RWPE1 (cell line): ENCODE measurements at regions of chr9 and their contacts with region 1.

Region 1: GRCh38 chr9:34403554-34404380 is 27.1 kb upstream of the MYORG start:
- DNase-seq: peak; percentile 78
- H3K27ac ChIP-seq: no peak overlapping the region
- CTCF ChIP-seq: peak; percentile 100

Region 2: GRCh38 chr9:34328987-34329832 is 74.6 kb before region 1 on chr9 and contains the starts of genes KIF24 and NUDT2:
- CTCF ChIA-PET with region 1: interaction called, 11 read pairs
- POLR2A ChIA-PET with region 1: no interaction called
- DNase-seq: peak; percentile 99
- H3K27ac ChIP-seq: peak within 1 kb of the TSS; percentile 93
- CTCF ChIP-seq: no peak

Region 3: DNA sequence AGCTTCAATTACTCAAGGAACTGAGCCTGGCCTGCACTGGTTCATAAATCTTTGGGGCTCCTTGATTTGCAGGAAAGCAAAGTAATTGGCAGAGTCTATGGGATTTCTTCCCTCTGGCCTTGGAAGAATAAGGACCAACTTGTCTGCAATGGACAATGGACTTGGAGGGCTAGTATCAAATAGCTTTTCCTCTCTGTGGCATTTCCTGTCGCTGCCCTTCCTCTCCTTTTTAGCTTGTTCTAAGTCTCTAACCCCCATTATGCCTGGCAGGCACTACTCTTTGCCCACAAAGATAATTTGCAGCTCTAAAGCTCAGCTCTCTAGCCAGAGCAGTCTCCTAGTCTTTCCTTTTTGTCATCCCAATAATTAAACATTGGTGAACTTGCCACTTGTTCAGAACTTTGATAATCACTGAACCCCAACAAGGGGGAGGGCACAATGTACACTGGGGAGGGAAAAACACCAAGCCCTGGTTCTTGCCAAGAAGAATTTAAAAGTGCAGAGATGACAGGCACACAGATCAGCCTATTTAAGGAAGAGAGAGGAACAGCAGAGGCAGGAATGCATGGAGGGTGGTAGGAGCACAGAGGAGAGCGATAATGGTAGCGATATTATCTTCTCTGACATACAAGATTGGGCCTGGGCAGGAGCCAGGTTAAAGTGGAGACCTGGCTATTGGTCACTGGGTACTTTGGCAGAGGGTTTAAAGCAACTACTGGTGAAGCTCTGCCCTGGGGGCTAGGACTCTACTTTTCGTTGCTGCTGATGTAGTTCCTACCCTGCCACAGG is 16.1 kb after region 1 on chr9:
- CTCF ChIA-PET with region 1: interaction called, 10 read pairs
- POLR2A ChIA-PET with region 1: interaction called, 7 read pairs
- DNase-seq: no peak
- H3K27ac ChIP-seq: peak overlapping the region; percentile 33; the same call in 1 of the 2 replicates
- CTCF ChIP-seq: no peak

Region 4: DNA sequence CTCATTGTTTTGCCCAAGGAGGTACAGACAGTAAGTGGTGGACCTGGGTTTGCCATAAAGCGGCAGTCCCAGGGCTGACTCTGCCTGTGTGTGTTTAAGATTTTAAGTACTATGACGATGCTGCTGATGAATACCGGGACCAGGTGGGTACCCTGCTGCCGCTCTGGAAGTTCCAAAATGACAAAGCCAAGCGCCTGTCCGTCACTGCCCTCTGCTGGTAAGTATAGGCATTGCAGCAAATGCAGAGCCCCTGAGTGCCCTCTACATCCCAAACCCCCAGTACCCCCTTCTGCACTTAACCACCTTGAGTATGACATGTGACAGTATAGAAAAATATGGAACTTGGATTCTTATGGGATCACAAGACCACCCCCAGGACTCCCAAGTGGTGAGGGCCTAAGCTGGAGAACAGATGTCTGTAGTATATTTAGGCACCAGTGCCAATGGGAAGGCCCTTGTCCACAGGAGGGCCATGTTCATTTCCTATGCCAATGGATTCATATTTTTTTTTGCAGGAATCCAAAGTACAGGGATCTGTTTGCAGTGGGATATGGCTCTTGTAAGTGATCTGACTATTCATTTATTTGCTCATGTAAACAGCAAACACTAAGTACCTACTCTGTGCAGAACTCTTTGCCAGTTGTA is 97.0 kb after region 1 on chr9:
- CTCF ChIA-PET with region 1: interaction called, 11 read pairs
- POLR2A ChIA-PET with region 1: no interaction called
- DNase-seq: peak; percentile 78
- H3K27ac ChIP-seq: no peak overlapping the region
- CTCF ChIP-seq: peak; percentile 100

Region 5: DNA sequence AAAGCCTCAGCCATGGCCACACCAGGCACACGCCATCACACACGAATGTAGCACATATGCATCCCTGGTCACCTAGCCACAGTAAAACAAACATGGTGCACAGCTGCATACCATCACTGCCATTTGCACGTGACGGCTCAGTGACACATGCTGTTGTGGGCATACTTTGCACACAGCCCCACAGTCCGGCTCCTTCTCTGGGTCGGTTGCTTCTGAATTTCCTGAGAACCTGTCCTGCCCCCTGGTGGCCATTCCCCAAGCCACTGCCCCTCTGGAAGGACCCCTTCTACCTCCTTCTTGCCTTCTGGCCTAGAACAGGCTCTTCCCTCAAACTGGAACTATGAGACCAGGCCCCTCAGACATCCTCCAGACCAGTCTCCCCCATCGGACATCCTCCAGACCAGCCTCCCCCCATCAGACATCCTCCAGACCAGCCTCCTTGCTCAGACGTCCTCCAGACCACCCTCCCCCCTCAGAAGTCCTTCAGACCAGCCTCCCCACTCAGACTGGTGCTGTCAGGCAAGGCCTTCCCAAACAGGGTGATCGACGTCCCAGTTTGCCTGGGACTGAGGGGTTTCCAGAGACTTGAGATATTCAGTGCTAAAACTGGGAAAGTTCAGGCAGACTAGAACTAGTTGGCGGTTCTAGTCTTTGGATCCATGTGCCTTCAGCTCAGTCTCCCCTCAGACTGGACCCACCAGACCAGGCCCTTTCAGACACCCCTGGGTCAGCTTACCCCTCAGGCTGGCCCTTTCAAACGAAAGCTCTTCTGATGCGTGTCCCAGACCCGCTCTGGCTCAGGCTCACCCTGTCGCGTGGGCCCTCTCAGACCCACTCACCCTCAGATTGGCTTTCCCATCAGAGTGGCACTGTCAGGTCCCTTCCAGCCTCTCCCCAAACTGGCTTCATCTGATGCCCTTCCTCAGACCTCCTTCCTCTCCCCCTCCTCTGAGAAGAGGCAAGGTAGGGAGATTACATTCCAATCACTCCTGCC is 143.4 kb after region 1 on chr9:
- CTCF ChIA-PET with region 1: interaction called, 13 read pairs
- POLR2A ChIA-PET with region 1: no interaction called
- DNase-seq: peak; percentile 41
- H3K27ac ChIP-seq: no peak overlapping the region
- CTCF ChIP-seq: peak; percentile 70

Region 6: DNA sequence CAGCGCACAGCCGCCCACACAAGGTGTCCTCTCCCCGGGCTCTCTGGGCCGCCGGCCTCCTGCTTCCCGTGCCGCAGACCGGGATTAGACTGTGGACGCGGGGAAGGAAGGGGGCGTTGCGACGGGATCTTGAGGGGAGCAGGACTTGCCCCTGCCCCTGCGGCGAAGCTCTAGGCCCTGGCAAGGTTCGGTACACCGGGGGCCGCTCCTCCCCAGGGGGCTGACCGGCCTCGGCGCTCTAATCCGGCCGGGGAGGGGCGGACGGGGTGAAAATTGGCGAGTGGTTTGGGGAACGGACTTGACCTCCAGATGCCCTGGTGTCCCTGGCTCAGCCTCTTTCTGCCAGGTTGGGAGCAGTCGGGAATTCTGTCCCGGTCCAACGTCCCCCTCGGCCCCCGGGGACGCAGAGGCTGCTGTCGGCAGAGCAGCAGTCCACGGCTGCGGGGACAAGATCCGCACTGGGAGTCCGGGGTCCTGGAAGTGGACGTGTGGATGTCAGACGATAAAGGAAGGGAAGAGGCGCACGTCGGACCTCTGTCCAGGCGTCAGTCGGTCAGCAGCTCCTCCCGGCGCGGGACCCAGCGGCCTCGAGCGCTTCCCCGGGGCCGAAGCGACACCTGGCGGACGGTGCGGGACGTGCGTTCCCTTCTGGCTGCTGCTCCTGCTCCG is 187.6 kb after region 1 on chr9:
- CTCF ChIA-PET with region 1: interaction called, 32 read pairs
- POLR2A ChIA-PET with region 1: no interaction called
- DNase-seq: peak; percentile 88
- H3K27ac ChIP-seq: no peak overlapping the region
- CTCF ChIP-seq: peak; percentile 99

Region 7: GRCh38 chr9:34603610-34604231 is 200.0 kb after region 1 on chr9:
- CTCF ChIA-PET with region 1: interaction called, 10 read pairs
- POLR2A ChIA-PET with region 1: no interaction called
- DNase-seq: peak; percentile 87
- H3K27ac ChIP-seq: no peak overlapping the region
- CTCF ChIP-seq: peak; percentile 98

Region 8: DNA sequence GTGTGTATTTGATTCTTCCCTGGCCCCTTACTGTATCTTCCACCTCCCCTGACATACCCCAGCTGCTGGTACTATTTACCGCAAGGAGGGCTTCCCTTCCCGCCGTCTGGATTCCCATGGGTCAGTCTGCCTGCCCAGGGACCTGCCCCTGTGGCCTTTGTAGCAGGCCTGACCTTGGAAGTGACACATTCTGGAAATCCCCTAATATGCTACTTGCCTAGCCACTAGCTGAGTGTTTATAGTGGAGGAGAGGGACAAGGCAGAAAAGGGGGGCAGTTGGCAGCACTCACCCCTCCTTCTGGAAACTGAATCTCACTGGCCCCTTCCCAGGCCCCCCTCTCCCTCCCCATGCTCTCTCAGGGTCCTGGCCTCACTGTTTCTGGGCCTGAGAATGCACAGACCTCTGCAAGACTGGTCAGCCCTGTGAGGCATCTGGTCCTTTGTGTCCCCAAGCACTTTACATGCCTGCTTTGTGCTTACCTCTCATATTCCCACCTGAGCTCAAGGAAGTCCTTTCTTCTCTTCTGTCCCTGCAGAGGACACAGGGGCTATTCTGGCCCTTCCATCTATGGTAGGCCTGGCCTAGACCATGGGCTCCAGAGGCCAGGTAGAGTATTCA is 314.3 kb after region 1 on chr9:
- CTCF ChIA-PET with region 1: no interaction called
- POLR2A ChIA-PET with region 1: no interaction called
- DNase-seq: no peak
- H3K27ac ChIP-seq: no peak overlapping the region
- CTCF ChIP-seq: no peak

Region 9: DNA sequence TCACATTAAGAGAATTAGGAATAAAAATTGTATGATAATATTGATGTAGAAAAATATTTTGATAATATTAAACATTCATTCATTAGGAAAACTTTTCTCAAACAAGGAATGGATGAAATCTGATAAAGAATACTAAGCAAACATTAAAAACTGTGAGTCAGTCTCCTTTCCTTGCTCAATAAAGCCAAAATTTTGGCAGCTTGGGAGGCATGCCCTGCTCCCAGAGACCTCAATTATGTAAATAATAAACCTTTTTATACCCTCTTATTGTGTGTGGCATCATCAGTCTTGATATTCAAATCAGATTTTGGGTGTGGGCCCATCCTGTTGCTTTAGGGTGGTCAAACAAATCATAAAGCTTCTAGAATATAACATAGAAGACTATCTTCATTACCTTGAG is 342.8 kb after region 1 on chr9:
- CTCF ChIA-PET with region 1: no interaction called
- POLR2A ChIA-PET with region 1: no interaction called
- DNase-seq: no peak
- H3K27ac ChIP-seq: no peak overlapping the region
- CTCF ChIP-seq: no peak